GM10248 (cell line): ENCODE measurements at regions of chr10 and their contacts with region 1.

Region 1: DNA sequence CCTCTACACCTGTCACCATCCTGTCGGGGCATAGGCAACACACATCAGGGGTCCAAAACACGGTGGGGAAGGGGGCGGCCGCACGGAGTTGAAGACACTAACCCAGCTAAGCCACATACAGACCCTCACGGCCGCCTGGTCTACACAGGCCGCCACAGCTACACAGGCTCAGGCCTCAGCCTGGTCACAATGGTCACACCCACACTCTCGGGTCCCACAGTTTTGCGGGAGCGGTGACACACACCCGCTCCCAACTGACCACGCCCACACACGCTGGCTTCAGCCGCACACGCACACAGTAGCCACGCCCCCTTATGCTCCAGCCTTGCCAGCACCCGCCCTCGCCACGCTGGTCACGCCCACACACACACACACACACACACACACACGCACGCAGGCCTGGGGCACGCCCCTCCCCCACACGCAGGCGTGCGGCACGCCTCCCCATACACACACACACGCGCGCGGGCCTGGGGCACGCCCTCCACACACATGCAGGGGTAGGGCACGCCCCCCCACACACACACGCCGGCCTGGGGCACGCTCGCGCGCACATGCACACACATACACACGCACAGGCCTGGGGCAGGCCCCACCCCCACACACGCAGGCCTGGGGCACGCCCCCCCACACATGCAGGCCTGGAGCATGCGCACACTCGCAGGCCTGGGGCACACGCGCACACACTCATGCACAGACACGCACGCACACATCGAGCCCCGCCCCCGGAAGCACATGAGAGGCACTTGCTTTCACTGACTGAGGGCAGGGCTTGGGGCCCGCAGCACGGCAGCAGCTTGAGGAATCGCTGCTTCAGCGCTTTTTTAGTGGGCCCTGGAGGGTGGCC is 12.3 kb upstream of the OGA start:
- DNase-seq: peak; percentile 88
- CTCF ChIP-seq: no peak

Region 2: DNA sequence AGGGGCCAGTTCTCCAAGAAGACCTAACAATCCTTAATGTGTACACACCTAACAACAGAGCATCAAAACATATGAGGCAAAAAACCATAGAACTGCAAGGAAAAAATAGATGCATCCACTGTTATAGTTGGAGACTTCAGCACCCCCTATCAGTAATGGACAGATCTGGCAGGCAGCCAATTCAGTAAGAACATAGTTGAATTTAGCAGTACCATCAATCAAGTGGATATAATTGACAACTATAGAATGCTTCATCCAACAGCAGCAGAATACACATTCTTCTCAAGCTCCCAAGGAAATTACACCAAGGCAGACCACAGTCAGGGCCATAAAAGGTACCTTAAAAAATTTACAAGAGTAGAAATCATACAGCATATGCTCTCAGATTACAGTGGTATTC is 284.6 kb before region 1 on chr10:
- CTCF ChIA-PET with region 1: no interaction called
- POLR2A ChIA-PET with region 1: no interaction called
- DNase-seq: no peak
- CTCF ChIP-seq: no peak

Region 3: DNA sequence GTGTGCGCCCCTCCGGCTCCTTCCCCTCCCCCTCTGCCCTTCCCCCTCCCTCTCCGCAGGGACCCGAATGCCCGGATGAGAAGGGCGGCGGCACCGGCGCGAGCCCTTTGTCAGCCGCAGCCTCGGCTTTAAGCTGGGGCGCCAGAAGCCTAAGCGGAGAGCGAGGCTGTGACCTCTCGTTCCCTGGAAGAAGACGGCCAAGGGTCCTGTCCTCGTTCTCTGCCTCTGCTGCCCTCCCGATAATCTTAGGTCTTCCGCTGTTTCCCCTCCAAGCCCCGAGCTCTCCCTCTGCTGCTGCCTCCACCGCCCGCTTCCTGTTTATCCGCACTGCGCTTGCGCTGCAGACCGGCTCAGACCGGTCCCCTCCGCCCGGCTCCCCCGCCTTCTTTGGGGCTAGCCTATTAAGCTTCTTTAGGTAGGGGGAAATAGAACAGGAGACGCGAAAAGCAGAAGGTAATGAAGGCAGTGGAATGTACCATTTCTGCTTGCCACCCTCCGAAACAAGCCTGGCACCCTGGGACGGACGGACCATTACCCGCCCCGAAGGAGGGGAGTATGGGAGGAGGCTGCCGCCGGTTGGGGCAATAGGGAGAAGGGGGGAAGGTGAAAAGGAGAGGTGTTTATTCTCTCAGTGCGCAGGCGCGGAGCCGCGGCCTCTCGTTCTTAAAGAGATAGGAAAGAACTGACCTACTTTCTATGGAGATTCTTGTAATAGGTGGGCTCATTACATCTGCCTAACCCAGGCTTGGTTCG is 12.2 kb before region 1 on chr10 and contains the start of gene OGA:
- CTCF ChIA-PET with region 1: interaction called, 66 read pairs
- POLR2A ChIA-PET with region 1: interaction called, 5 read pairs
- DNase-seq: peak; percentile 94
- CTCF ChIP-seq: no peak